Keratinocyte (primary cell): ENCODE measurements at regions of chr7 and their contacts with region 1.

Region 1: DNA sequence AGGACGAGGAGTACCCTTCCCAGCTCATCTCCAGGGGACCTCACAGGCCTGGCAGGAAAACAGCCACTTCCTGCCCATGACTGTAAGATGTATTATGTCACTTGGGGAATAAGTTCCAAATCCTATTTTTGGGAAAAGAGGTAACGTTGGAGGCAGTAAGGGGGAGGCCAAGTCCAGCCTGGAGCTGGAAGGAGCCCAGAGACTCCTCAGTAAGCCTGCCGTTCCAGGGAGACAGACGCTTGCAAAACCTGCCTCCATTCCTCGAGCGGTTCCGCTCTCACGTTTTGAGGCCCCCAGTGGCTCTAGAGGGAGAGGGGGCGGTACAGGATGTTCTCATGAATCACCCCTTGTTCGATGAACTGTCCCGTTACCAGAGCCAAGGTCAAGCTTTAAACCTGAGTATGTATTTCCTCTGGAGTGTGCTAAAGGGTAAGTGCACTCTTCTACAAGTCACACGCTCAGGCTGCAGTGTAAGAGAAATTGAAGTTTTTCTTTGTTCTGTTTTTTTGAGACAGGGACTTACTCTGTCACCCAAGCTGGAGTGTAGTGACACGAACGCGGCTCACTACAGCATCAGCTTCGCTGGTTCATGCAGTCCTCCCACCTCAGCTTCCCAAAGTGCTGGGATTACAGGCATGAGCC is 45.5 kb upstream of the CYTH3 start:
- DNase-seq: no peak
- H3K4me3 ChIP-seq: no peak overlapping the region
- H3K27ac ChIP-seq: no peak overlapping the region
- H3K4me1 ChIP-seq: no peaks in the 10 kb centered on the region
- H3K27me3 ChIP-seq: no peaks in the 10 kb centered on the region
- CTCF ChIP-seq: no peak

Region 2: DNA sequence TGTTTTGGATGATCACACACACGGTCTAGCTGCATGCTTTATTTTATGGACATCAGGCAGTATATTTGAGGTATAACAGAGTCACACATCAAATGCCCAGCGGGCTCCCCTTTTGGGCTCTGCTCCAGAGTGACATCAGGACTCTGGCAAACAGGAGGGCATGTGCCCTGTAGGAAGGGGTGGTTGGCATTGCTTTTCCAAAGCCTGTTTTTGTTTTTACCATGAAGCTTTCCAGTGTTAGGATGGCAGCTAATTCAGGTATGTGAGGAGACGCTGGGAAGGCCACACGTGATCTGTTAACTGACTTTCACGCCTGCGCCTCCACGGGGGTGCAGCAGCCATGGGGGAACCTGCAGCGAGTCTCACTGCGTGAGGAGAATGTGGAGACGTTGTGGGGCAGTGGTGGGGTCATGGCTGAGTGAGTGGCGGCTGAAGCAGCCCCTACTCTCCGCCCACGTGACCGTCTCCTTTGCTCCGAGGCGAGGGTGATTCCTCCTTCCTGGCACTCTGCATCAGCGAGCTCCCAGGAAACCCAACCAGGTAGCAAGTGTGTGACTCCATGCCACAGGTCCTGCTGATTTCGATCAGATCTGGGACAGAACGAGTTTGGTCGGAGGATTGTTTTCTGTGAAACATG is 169.1 kb before region 1 on chr7:
- dilution Hi-C with region 1: loop called (anchors 10 kb)
- DNase-seq: no peak
- H3K4me3 ChIP-seq: no peak overlapping the region
- H3K27ac ChIP-seq: no peak overlapping the region
- H3K4me1 ChIP-seq: no peaks in the 10 kb centered on the region
- H3K27me3 ChIP-seq: no peaks in the 10 kb centered on the region
- CTCF ChIP-seq: no peak